Activated B cell treated with CpG ODN at 0.5 μM for 24 hours (primary cell): ENCODE measurements at regions of chrX and their contacts with region 1.

Region 1: GRCh38 chrX:48521353-48522243 is at the start of gene EBP:
- DNase-seq: peak; percentile 79
- ATAC-seq: peak; percentile 96
- H3K4me3 Mint-ChIP-seq: peak within 1 kb of the TSS; percentile 86
- H3K27ac Mint-ChIP-seq: peak within 1 kb of the TSS; percentile 88
- H3K4me1 Mint-ChIP-seq: peaks cover 24% of the 10 kb centered on the region
- H3K27me3 Mint-ChIP-seq: no peaks in the 10 kb centered on the region
- CTCF ChIP-seq: no peak
- total RNA-seq, gene EBP: 72.4 and 75.5 TPM in 2 replicates

Region 2: DNA sequence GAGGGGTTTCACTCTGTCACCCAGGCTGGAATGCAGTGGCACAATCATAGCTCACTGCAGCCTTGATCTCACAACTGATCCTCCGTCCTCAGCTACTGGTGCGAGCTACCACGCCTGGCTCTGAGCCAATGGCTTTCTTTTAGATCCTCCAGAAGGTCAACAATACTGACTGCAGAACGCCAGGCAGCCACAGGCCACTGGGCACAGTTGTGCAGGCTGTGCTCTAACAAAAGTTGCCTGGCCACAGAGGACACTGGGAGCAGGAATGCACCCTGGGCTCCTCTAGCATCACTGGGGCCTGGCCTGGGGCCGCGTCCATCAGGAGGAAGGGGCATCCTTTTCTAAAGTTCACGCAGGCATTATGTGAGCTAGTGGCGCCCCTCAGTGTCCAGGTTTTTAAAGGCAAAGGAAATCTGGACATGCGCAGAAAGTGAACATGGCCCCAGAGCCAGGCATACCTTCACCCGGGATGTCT is 27.7 kb before region 1 on chrX:
- CTCF ChIA-PET with region 1: no interaction called
- POLR2A ChIA-PET with region 1: no interaction called
- intact Hi-C with region 1: no loop called
- DNase-seq: no peak
- ATAC-seq: peak; percentile 31
- H3K4me3 Mint-ChIP-seq: no peak overlapping the region
- H3K27ac Mint-ChIP-seq: no peak overlapping the region
- H3K4me1 Mint-ChIP-seq: no peaks in the 10 kb centered on the region
- H3K27me3 Mint-ChIP-seq: peaks cover 2% of the 10 kb centered on the region
- CTCF ChIP-seq: no peak

Region 3: DNA sequence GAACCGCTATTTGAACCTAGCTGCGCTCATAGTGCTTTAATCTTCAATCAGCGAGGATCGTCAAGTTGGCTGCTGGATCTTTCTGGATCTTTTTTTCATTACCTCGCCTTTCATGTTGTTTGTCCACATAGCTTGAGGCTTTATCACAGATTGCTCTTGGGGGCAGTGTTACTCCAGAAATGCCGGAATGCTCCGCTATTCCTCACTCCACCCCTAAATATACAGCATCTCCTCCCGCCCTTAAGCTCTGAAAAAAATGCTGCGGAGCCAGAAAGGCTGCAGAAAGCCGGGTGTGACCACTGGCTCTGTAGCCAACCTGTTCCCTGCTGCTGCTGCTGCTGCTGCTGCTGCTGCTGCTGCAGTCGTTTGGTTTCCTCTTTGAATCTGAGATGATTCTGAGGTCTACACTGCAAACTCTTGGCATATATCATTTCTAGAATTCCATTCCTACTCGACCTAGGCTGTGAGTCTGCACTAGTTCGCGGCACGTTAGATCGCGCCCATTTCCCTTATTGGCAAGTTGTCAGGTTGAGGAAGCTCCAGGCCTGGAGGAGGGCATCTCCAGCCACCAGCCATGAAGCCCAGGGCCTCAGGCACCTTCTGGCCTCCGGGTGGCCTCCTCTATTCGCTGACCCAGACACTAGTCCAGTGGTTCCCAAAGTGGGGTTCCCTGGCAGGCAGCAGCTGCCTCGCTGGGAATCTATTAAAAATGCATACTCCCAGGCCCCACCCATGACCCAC is 109.9 kb after region 1 on chrX:
- CTCF ChIA-PET with region 1: no interaction called
- POLR2A ChIA-PET with region 1: interaction called, 11 read pairs
- intact Hi-C with region 1: no loop called
- DNase-seq: peak; percentile 17
- ATAC-seq: peak; percentile 79
- H3K4me3 Mint-ChIP-seq: peak overlapping the region; percentile 7
- H3K27ac Mint-ChIP-seq: no peak overlapping the region
- H3K4me1 Mint-ChIP-seq: peaks cover 3% of the 10 kb centered on the region
- H3K27me3 Mint-ChIP-seq: no peaks in the 10 kb centered on the region
- CTCF ChIP-seq: no peak